Body of pancreas (tissue), 4 donors: ENCODE measurements at regions of chr1 and their contacts with region 1.

Region 1: DNA sequence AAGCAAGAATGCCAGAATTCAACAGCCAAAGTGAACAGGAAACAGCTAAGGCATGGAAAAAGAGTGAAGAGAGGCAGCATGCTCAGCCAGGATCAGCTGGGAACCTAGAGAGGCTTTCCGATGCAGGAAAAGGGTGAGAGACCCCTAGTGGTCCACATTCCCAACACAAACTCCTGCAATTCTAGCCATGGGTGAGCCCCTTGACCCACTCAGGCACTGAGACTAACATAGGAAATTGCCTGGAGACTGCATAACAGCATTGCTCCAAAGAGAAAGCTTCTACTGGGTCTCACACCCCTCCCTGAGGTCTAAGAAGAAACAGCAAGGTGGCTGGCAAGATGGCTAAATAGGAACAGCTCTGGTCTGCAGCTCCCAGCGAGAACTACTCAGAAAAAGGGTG is 123.2 kb downstream of the LHX8 start:
- DNase-seq: no peak
- ATAC-seq: no peak
- H3K4me3 ChIP-seq: no peak overlapping the region
- H3K27ac ChIP-seq: no peak overlapping the region
- H3K4me1 ChIP-seq: no peaks in the 10 kb centered on the region
- H3K27me3 ChIP-seq: no peaks in the 10 kb centered on the region
- CTCF ChIP-seq: no peak
- POLR2A ChIP-seq: no peak

Region 2: DNA sequence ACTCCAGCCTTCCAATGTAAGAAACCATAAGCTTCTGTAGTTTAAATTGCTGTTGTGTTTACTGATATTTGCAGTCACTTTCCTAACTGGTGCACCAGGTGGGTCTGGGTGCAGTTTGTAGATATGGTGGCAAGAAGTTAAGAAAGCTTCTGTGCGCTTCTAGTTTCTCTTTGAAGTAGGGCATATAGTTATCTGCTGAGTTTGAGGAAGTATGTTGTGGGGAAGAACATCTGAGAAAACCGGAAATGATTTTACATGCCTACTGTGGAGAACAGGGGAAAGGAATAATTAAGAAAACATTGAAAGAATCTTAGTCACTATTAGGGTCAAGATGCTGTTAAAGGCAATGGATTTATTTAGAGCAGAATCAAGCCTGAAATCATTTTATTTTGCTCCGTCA is 368.4 kb after region 1 on chr1:
- intact Hi-C with region 1: loop called (anchors 10 kb)
- DNase-seq: no peak
- ATAC-seq: no peak
- H3K4me3 ChIP-seq: no peak overlapping the region
- H3K27ac ChIP-seq: no peak overlapping the region
- H3K4me1 ChIP-seq: no peaks in the 10 kb centered on the region
- H3K27me3 ChIP-seq: no peaks in the 10 kb centered on the region
- CTCF ChIP-seq: no peak
- POLR2A ChIP-seq: no peak